PC-9 (cell line): ENCODE measurements at regions of chr10 and their contacts with region 1.

Region 1: DNA sequence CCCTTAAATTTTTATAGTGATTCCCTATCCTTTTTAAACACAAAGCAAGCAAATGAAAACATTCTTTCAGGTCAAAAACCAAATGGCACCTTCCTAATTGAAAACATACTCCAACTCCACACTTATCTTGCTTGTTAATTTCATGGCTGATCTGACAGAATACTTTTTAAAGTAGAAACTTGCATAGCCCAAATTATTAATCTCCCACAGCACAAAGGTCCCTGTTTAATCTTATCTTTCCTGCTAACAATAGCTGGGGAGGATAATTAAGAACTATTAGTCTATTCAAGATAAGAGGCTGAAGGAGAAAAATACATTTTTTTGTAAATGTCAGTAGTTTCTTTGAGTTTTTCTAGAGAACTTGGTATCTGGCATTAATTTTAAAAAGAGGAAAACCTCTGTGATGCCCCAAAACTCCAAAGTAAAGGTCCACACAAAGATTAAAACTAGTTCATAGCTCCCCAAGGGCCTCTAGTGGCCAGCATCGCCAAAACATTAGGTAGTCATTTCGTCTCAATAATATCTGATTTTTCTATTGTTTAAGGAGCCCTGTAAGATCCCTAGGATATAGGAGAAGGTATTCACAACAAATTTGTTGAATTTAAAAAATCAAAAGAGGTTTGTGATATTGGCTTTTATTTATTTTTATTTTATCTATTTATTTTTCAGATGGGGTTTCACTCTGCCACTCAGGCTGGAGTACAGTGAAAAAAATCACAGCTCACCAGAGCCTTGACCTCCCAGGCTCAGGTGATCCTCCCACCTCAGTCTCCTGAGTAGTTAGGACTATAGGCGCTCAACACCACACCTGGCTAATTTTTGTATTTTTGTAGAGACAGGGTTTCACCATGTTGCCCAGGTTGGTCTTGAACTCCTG is 14.7 kb downstream of the CDNF start:
- DNase-seq: peak in 1 of 2 experiments; percentile 37
- H3K4me3 ChIP-seq: no peak overlapping the region
- H3K27ac ChIP-seq: no peak overlapping the region
- H3K4me1 ChIP-seq: peaks cover 27% of the 10 kb centered on the region
- H3K27me3 ChIP-seq: no peaks in the 10 kb centered on the region
- CTCF ChIP-seq: peak; percentile 74

Region 2: DNA sequence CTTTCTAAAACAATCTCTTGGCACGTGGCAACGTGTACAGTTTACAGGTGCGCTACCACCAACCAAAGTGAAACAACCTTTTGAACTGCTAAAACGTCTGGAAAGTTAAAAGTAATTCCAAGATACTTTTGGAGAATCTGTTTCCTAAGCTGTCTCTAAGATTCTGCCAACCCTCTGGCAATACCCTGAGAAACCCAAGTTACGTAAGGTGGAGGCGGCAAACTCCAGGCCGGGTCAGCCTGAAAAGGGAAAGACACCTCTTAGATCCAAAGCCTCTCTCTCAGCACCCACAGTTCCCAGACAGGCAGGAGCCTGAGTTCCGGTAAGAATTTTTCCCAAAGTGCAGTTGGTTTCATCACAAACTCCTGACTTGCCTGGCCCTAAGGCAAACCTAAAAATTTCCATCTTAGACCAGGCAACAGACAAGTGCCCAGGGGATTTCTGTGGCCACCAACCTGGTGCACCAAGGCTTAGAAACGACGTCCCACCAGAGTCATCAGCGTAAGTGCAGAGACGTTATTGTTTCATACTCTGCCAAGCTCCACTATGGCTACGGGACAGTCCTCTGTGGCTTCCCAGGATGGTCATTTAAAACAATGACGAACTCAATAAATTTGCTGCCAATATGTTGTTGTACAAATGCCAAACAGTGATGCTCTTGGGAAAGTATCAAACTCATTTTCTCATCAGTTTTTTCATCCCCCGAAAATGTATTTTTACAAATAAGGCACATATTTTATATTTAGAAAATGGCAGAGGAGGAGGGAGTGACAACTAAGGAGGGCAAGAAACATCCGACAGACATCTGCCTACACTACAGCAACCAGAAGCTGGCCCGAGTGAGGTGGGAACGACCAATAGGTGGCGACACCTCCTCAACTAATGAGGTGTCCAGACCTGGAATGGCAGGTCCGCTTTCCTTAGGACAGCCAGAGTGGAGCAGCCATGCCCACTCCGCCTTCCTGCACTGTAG is 286.6 kb before region 1 on chr10:
- CTCF ChIA-PET with region 1: interaction called, 3 read pairs
- POLR2A ChIA-PET with region 1: no interaction called
- intact Hi-C with region 1: loop called (anchors 1 kb)
- DNase-seq: peak in 1 of 2 experiments; percentile 65
- H3K4me3 ChIP-seq: no peak overlapping the region
- H3K27ac ChIP-seq: no peak overlapping the region
- H3K4me1 ChIP-seq: peaks cover 8% of the 10 kb centered on the region; the same call in 1 of the 2 replicates
- H3K27me3 ChIP-seq: no peaks in the 10 kb centered on the region
- CTCF ChIP-seq: peak; percentile 68

Region 3: DNA sequence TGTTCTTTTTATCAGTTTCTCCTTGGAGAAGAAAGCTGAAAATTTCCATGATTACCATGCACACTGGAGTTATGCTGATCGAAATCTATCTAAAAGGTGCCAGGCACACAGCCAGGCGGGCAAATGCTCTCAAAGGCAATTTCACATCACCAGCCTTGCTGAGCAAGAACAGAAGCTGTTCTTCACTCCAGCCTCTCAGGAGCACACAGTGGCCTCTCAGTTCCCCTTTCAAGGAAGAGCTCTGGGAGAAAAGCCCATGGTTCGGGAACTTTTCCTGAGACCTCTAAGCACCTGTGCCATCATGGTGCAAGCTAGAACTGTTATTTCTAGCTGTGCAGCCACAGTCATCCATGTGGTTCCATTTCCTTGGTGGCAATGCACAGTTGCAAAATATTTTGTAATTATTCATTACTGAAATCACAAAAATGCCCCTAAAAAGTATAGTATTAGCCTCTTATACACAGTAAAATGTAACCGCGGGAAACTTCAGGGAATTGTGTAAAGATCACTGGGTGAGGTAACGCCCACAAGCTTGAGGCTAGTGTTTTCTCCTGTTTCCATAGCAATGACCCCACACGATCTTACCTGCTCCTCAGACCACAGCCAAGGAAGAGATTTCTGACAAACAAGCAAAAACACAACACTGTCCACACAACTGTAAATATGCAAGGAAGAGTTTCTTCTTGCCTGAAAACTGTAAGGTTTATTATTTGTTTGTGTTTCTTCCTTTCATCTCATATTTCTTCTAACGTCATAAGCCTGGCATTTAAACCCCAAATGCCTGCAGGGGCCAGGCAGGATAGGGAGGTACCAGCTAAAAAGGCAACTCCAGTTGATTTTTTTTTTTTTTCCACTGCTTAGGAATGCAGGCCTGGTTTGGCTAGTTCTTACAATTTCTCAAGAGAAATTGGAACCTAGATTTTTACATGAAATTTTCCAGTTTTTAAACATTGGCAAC is 169.6 kb before region 1 on chr10:
- CTCF ChIA-PET with region 1: no interaction called
- POLR2A ChIA-PET with region 1: interaction called, 7 read pairs
- intact Hi-C with region 1: loop called (anchors 1 kb)
- DNase-seq: peak; percentile 80 to 96
- H3K4me3 ChIP-seq: peak overlapping the region; percentile 51
- H3K27ac ChIP-seq: peak overlapping the region; percentile 92
- H3K4me1 ChIP-seq: peaks cover 73% of the 10 kb centered on the region
- H3K27me3 ChIP-seq: no peaks in the 10 kb centered on the region
- CTCF ChIP-seq: no peak

Region 4: GRCh38 chr10:14748470-14748869 is 74.6 kb before region 1 on chr10:
- CTCF ChIA-PET with region 1: no interaction called
- POLR2A ChIA-PET with region 1: interaction called, 3 read pairs
- intact Hi-C with region 1: loop called (anchors 1 kb)
- DNase-seq: peak; percentile 92 to 93
- H3K4me3 ChIP-seq: no peak overlapping the region
- H3K27ac ChIP-seq: peak overlapping the region; percentile 80
- H3K4me1 ChIP-seq: peaks cover 27% of the 10 kb centered on the region
- H3K27me3 ChIP-seq: no peaks in the 10 kb centered on the region
- CTCF ChIP-seq: no peak